ENCODE measurements at regions of chr5 and their contacts with region 1.

Region 1: DNA sequence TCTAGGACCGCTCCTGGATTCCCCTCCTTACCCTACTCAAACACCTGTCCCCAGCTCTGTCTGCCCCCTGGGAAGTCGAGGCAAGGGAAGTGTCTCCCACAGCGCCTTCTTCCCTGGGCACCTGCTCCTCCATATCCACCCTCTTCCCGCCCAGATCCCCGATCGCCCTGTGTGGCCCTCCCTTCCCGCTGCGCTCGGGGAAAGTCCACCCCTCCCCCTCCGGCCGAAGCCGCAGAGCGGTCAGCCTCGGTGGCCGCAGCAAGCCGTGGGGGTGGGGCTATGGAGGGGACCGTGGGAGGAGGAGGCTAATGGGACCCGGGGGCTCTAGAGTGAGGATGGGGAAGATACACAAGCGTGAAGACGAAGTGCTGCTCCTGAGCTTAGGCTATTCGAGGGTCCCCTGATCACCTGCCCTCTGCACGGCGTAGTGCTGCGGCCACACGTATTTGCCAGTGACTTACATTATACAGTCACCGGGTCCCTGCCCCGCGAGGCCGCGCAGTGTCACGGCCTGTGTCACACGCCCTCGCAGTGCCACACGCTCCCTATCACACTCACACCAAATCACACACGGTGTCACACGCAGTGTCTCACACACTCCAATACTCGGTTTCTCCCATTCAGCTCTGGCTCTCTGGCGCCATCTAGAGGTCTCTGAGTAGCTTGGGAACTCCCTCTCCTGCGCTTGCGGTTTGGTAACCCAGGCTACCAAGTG is 658 bp upstream of the PCDH1 start:
- H3K4me3 ChIP-seq: peak overlapping the region; percentile 30
- H3K27ac ChIP-seq: peak overlapping the region; percentile 7; the same call in 1 of the 2 replicates
- H3K4me1 ChIP-seq: peaks cover 8% of the 10 kb centered on the region
- CTCF ChIP-seq: peak; percentile 96

Region 2: GRCh38 chr5:141811287-141812155 is 67.3 kb before region 1 on chr5:
- CTCF ChIA-PET with region 1: interaction called, 77 read pairs
- POLR2A ChIA-PET with region 1: no interaction called
- H3K4me3 ChIP-seq: no peak overlapping the region
- H3K27ac ChIP-seq: no peak overlapping the region
- H3K4me1 ChIP-seq: no peaks in the 10 kb centered on the region
- CTCF ChIP-seq: peak; percentile 59

Region 3: GRCh38 chr5:141832131-141832918 is 46.5 kb before region 1 on chr5:
- CTCF ChIA-PET with region 1: interaction called, 16 read pairs
- POLR2A ChIA-PET with region 1: no interaction called
- H3K4me3 ChIP-seq: no peak overlapping the region
- H3K27ac ChIP-seq: no peak overlapping the region
- H3K4me1 ChIP-seq: no peaks in the 10 kb centered on the region
- CTCF ChIP-seq: no peak

Region 4: GRCh38 chr5:141889282-141889871 is 10.5 kb after region 1 on chr5:
- CTCF ChIA-PET with region 1: interaction called, 30 read pairs
- POLR2A ChIA-PET with region 1: no interaction called
- H3K4me3 ChIP-seq: no peak overlapping the region
- H3K27ac ChIP-seq: no peak overlapping the region
- H3K4me1 ChIP-seq: no peaks in the 10 kb centered on the region
- CTCF ChIP-seq: no peak

Region 5: DNA sequence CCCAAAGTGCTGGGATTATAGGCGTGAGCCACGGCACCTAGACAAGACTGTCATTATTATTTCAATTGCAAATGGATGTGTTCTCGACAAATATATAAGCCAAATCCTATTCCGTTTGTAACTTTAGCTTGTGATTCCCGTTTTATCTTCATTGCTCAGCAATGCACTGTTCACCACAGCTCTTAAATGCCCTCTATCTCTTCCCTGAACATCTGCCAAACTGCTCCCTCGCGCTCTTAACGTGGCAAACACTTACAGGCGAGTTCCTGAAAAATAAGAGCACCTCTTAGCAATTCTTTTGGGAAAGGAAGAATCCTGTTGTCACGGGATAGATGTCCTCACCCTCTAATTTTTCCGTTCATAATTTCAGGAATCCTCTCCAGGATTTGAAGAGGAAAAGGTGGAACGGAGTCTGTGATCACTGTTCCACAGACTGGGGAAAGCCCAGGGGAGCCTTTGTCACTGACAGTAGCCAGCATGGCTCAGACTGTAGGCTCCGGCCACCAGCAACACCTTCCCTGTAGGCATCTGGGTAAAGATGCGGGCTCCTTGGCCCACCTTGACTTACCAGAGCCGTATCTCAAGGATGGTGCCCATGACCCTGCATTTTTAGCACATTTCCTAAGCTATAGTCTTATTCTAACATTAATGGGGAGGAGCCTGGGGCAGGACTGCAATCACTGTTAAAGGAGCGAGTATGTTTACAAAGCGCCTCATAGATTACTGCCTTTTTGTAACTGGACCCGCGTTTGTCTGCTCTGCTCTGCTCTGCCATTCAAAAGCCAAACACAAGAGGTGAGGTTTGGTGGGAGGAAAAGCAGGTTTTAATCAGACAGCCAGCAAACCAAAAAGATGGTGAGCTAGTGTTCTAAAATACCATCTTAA is 154.1 kb after region 1 on chr5:
- CTCF ChIA-PET with region 1: no interaction called
- POLR2A ChIA-PET with region 1: no interaction called
- H3K4me3 ChIP-seq: no peak overlapping the region
- H3K27ac ChIP-seq: no peak overlapping the region
- H3K4me1 ChIP-seq: no peaks in the 10 kb centered on the region; the same call in 1 of the 2 replicates
- CTCF ChIP-seq: no peak

Region 6: GRCh38 chr5:142079306-142079721 is 200.4 kb after region 1 on chr5:
- CTCF ChIA-PET with region 1: no interaction called
- POLR2A ChIA-PET with region 1: no interaction called
- H3K4me3 ChIP-seq: no peak overlapping the region
- H3K27ac ChIP-seq: no peak overlapping the region
- H3K4me1 ChIP-seq: 0 out of 2 replicates have a peak, but pooled peaks cover 4% of the 10 kb centered on the region
- CTCF ChIP-seq: no peak